ENCODE measurements at regions of chr1 and their contacts with region 1.

Region 1: DNA sequence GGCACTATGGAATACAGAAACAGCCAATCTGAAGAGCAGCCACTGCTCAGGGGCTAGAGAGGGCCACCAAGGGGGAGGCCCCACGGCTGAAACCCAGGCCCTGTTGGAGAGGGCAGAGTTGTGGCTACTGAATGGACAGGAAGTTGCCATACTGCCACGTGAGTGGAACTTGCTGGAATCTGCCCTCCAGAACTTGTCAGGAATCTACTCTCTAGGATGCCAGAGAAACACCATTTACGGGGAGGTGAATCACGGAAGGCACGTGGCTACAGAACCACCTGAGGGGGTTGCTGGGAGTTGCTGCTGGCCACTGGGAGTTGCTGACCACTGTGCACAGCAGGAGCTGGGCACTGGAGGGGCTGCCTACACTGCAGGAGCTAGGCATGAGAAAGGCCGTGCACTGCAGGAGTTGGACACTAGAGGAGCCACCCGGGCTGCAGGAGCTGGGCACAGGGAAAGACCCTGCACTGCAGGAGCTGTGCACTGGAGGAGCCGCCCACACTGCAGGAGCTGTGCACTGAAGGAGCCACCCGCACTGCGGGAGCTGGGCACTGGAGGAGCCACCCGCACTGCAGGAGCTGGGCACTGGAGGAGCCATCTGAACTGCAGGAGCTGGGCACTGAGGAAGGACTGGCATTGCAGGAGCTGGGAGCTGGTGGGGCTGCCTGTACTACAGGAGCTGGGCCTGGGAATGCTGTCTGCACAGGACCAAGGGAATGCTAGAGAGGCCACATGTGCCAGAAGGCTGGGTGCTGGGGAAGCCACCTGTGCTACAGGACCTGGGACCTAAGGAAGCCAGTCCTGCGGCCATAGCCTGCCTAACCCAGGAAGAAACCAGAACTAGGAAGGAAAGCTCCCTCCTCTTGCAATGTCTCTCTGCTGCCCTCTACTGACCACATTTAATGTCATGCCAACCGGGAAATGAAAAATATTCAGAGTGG is 343.4 kb downstream of the MATN1 start:
- DNase-seq: peak; percentile 41
- H3K4me3 ChIP-seq: no peak overlapping the region
- H3K27ac ChIP-seq: no peak overlapping the region
- H3K4me1 ChIP-seq: peaks cover 0 to 7% (median 0%) of the 10 kb centered on the region in 4 donors
- H3K27me3 ChIP-seq: peaks cover 20% of the 10 kb centered on the region
- CTCF ChIP-seq: peak; percentile 73 to 89 (median 82)
- EP300 ChIP-seq: no peak
- POLR2A ChIP-seq: no peak

Region 2: DNA sequence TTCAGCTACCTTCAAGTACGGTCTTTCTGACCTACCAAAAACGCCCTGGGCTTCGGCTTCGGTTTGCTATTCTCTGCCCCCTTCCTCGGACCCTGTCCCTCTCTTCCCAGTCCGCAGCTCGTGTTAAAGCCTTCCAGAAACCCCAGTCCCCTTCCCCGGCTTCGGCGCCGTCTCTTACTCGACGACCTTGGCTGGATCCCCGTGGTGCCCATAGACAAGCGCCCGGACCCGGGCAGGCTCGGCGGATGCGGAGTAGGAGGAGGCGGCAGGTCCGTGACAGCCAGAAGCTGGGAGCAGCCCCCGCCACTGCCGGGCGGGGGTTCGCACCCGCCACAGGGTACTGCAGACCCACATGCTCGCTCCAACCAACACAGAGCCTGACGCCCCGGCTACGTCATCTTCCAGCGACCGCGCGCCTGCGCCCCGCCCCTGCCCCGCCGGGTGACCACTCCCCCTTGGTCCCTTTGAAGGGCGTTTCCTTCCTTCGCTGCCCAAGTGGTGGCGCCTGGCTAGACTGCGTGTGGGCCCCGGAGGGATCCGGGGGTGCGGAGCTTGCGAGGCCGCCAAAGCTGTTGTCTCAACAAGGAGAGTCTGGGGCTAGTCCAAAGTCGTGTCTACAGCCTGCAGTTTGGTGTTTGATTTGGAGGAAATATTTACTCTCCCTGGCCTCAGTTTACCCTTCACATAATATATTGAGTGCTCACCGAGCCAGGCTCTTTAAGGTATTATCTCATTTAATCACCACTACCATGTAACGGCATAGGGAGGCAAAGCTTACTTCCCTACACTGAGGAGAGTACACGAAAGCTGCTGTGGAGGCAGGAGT is 1149.2 kb before region 1 on chr1 and contains the start of gene MECR:
- in situ Hi-C with region 1: loop called in 1 of 4 experiments (anchors 25 kb)
- intact Hi-C with region 1: no loop called
- DNase-seq: peak; percentile 95
- H3K4me3 ChIP-seq: peak within 1 kb of the TSS; percentile 63 to 89 (median 82)
- H3K27ac ChIP-seq: peak within 1 kb of the TSS; percentile 63 to 88 (median 80)
- H3K4me1 ChIP-seq: peaks cover 4 to 17% (median 13%) of the 10 kb centered on the region in 4 donors
- H3K27me3 ChIP-seq: peaks cover 7% of the 10 kb centered on the region
- CTCF ChIP-seq: peak in 3 of 5 experiments; percentile 5 to 44 (median 7)
- EP300 ChIP-seq: no peak
- POLR2A ChIP-seq: peak; percentile 75
- total RNA-seq, gene MECR: 5.2 to 16.0 (median 12.2) TPM in 3 of 4 donors, not detected in the other

Region 3: GRCh38 chr1:29235955-29236684 is 1143.8 kb before region 1 on chr1 and contains the start of gene PTPRU:
- in situ Hi-C with region 1: loop called in 2 of 4 experiments (anchors 10 to 25 kb)
- intact Hi-C with region 1: loop called (anchors 2 kb)
- DNase-seq: peak; percentile 84
- H3K4me3 ChIP-seq: peak within 1 kb of the TSS; percentile 35 to 54 (median 52)
- H3K27ac ChIP-seq: peak within 1 kb of the TSS in 3 of 4 donors; percentile 26 to 70 (median 58)
- H3K4me1 ChIP-seq: peaks cover 4 to 24% (median 20%) of the 10 kb centered on the region in 4 donors
- H3K27me3 ChIP-seq: peaks cover 42% of the 10 kb centered on the region
- CTCF ChIP-seq: peak; percentile 41 to 84 (median 68)
- EP300 ChIP-seq: no peak
- POLR2A ChIP-seq: no peak
- total RNA-seq, gene PTPRU: 5.6 to 9.7 (median 7.4) TPM

Region 4: DNA sequence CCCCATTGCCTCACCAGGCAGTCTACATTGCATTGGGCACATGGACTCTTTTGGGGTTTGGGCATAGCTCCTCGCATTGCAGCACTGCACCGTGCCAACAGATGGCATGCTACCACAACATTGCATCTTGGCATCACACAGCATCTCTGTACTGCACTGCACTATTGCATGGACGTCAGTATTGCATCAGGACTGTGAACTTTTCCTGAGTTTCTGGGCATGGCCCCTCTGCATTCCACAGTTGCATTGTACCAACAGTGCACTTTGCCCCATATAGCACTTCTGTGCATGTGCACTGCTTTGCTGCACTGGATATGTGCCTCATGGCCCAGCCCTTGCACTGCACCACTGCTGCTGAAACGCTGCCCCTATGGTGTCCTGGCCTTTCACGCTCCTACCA is 1134.1 kb before region 1 on chr1:
- in situ Hi-C with region 1: loop called in 2 of 4 experiments (anchors 10 to 25 kb)
- intact Hi-C with region 1: no loop called
- DNase-seq: peak; percentile 27
- H3K4me3 ChIP-seq: no peak overlapping the region
- H3K27ac ChIP-seq: no peak overlapping the region
- H3K4me1 ChIP-seq: no peaks in the 10 kb centered on the region
- H3K27me3 ChIP-seq: no peaks in the 10 kb centered on the region
- CTCF ChIP-seq: peak in 4 of 5 experiments; percentile 50 to 72 (median 52)
- EP300 ChIP-seq: no peak
- POLR2A ChIP-seq: no peak

Region 5: GRCh38 chr1:29453502-29454240 is 926.3 kb before region 1 on chr1:
- in situ Hi-C with region 1: loop called in 1 of 4 experiments (anchors 5 kb)
- intact Hi-C with region 1: no loop called
- DNase-seq: no peak
- H3K4me3 ChIP-seq: no peak overlapping the region
- H3K27ac ChIP-seq: no peak overlapping the region
- H3K4me1 ChIP-seq: no peaks in the 10 kb centered on the region
- H3K27me3 ChIP-seq: peaks cover 4% of the 10 kb centered on the region
- CTCF ChIP-seq: peak in 1 of 5 experiments; percentile 20
- EP300 ChIP-seq: no peak
- POLR2A ChIP-seq: no peak

Region 6: GRCh38 chr1:30707412-30708360 is 327.7 kb after region 1 on chr1:
- in situ Hi-C with region 1: no loop called
- intact Hi-C with region 1: loop called (anchors 5 kb)
- DNase-seq: peak; percentile 72
- H3K4me3 ChIP-seq: no peak overlapping the region
- H3K27ac ChIP-seq: no peak overlapping the region
- H3K4me1 ChIP-seq: peaks cover 0 to 13% (median 9%) of the 10 kb centered on the region in 4 donors
- H3K27me3 ChIP-seq: peaks cover 10% of the 10 kb centered on the region
- CTCF ChIP-seq: peak; percentile 75 to 91 (median 75)
- EP300 ChIP-seq: no peak
- POLR2A ChIP-seq: no peak

Region 7: GRCh38 chr1:31910933-31911332 is 1531.0 kb after region 1 on chr1:
- in situ Hi-C with region 1: no loop called
- intact Hi-C with region 1: no loop called
- DNase-seq: no peak
- H3K4me3 ChIP-seq: no peak overlapping the region
- H3K27ac ChIP-seq: no peak overlapping the region
- H3K4me1 ChIP-seq: peaks cover 16 to 26% (median 20%) of the 10 kb centered on the region in 4 donors
- H3K27me3 ChIP-seq: no peaks in the 10 kb centered on the region
- CTCF ChIP-seq: no peak
- EP300 ChIP-seq: no peak
- POLR2A ChIP-seq: no peak

Measured in transverse colon (tissue), 4 donors.